ENCODE measurements at regions of chr7 and their contacts with region 1.

Region 1: GRCh38 chr7:28062197-28062991 is 118.2 kb downstream of the JAZF1 start:
- DNase-seq: no peak
- H3K4me3 ChIP-seq: no peak overlapping the region
- H3K27me3 ChIP-seq: no peaks in the 10 kb centered on the region
- CTCF ChIP-seq: peak; percentile 78

Region 2: DNA sequence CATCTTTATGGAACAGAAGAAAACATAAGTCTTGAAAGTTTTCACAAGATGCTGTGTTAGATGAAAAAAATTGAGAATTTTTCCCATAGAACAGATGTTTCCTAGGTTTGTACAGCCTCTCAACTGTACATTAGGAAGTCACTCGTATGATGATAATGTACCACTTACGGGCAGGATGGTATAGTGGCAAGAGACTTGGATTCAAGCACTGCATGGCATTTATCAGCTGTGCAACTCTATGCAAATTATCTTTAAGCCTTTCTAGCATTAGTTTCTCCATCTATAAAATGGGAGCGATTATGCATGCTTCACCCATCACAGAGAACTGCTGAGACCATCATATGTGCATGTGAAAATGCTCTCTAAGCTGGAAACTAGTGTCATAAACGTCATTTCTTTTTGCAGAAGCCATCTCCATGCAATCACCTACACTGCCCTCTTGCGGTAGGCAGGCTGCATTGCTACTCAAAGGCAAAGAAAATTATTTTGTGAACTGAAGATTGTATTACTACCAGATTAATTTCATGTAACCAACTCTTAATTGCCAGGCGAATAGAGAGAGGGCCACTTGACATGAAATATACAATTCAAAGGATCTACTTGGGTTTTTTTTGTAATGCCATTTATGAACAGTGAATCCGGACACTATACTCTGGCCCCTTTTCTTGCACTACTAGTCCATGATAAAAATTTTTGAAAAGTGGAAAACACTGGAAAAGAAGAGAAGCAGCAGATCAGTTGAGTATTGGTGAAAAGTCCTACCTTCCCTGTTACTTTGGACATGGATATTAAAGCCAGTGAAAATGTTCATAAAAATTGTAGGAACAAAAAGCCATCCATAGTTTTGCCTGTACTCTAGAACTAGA is 15.9 kb after region 1 on chr7:
- CTCF ChIA-PET with region 1: interaction called, 35 read pairs
- POLR2A ChIA-PET with region 1: no interaction called
- DNase-seq: no peak
- H3K4me3 ChIP-seq: no peak overlapping the region
- H3K27me3 ChIP-seq: no peaks in the 10 kb centered on the region
- CTCF ChIP-seq: peak; percentile 98

Region 3: GRCh38 chr7:28169230-28169629 is 106.8 kb after region 1 on chr7:
- CTCF ChIA-PET with region 1: no interaction called
- POLR2A ChIA-PET with region 1: no interaction called
- DNase-seq: no peak
- H3K4me3 ChIP-seq: no peak overlapping the region
- H3K27me3 ChIP-seq: no peaks in the 10 kb centered on the region
- CTCF ChIP-seq: no peak

Measured in BJ (cell line).